Activated CD4-positive, alpha-beta T cell treated with anti-CD3 and anti-CD28 coated beads, Interleukin-2, amount 10 ng/mL, durations not matched to agents 7 days and 5 days (primary cell): ENCODE measurements at regions of chr6 and their contacts with region 1.

Region 1: GRCh38 chr6:26249957-26250697 is 114.9 kb upstream of the BTN3A2 start:
- DNase-seq: peak; percentile 82
- H3K4me3 Mint-ChIP-seq: peak overlapping the region; percentile 98
- H3K27ac Mint-ChIP-seq: peak overlapping the region; percentile 100
- H3K4me1 Mint-ChIP-seq: peaks cover 40% of the 10 kb centered on the region
- H3K27me3 Mint-ChIP-seq: no peaks in the 10 kb centered on the region

Region 2: DNA sequence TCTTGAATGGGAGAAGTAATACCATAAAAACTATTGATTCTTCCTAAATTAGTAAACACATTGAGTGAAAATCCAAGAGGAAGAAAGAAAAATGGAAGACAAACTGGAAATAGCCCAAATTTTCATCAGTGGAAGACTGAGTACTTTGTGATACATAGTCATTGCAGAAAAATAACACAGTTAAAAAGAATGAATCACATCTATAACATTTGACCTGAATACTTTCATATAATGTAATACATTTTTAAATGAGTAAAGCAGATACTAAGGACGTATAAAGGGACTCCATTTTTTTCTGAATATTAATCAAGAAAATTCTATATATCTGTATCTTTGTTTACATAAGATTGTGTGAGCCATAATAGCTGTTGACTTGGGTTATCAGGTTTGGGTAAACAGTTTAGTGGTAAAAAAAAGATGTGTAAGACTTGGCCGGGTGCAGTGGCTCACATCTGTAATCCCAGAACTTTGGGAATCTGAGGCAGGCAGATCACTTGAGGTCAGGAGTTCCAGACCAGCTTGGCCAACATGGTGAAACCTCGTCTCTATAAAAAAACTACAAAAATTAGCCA is 315.3 kb before region 1 on chr6:
- CTCF ChIA-PET with region 1: no interaction called
- POLR2A ChIA-PET with region 1: no interaction called
- DNase-seq: no peak
- H3K4me3 Mint-ChIP-seq: no peak overlapping the region
- H3K27ac Mint-ChIP-seq: no peak overlapping the region
- H3K4me1 Mint-ChIP-seq: no peaks in the 10 kb centered on the region
- H3K27me3 Mint-ChIP-seq: no peaks in the 10 kb centered on the region

Region 3: GRCh38 chr6:26285143-26286134 is 35.3 kb after region 1 on chr6:
- CTCF ChIA-PET with region 1: interaction called, 9 read pairs
- POLR2A ChIA-PET with region 1: interaction called, 27 read pairs
- DNase-seq: peak; percentile 99
- H3K4me3 Mint-ChIP-seq: peak overlapping the region; percentile 92
- H3K27ac Mint-ChIP-seq: peak overlapping the region; percentile 100
- H3K4me1 Mint-ChIP-seq: peaks cover 38% of the 10 kb centered on the region
- H3K27me3 Mint-ChIP-seq: peaks cover 2% of the 10 kb centered on the region

Region 4: DNA sequence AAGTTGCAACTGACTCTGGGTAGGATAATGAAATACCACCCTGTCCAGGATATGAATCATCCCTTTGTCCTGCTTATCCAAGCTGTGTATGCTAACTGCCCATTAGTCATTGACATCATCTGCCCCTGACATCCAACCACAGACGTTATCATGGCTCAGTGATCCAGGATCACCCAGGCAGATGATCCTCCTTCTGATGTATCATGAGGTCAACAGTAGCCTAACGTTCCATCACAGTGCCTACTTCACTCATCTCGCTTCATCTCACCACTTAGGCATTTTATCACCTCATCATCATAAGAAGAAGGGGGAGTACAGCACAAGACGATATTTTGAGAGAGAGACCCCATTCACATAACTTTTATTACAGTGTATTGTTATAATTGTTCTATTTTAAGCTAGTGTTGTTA is 101.4 kb after region 1 on chr6:
- CTCF ChIA-PET with region 1: no interaction called
- POLR2A ChIA-PET with region 1: no interaction called
- DNase-seq: no peak
- H3K4me3 Mint-ChIP-seq: no peak overlapping the region
- H3K27ac Mint-ChIP-seq: no peak overlapping the region
- H3K4me1 Mint-ChIP-seq: peaks cover 6% of the 10 kb centered on the region
- H3K27me3 Mint-ChIP-seq: peaks cover 3% of the 10 kb centered on the region